ENCODE measurements at regions of chr7 and their contacts with region 1.

Region 1: DNA sequence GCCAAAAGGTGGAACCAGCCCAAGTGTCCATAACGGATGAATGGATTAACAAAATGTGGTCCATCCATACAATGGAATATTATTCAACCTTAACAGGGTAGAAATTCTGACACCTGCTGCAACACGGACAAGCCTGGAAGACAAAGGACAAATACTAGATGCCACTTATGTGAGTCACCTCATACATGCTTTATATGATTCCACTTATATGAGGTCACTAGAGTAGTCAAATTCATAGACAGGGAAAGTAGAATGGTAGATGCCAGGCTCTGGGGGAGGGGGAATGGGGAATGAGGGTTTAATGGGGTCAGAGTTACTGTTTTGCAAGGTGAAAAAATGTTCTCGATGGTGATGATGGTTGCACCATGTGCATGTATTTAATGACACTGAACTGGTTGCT is 34.0 kb upstream of the CYTH3 start:
- DNase-seq: peak; percentile 87
- ATAC-seq: peak; percentile 99
- H3K4me3 ChIP-seq: no peak overlapping the region
- H3K27ac ChIP-seq: no peak overlapping the region
- H3K4me1 ChIP-seq: peaks cover 20% of the 10 kb centered on the region
- H3K27me3 ChIP-seq: no peaks in the 10 kb centered on the region
- CTCF ChIP-seq: no peak

Region 2: DNA sequence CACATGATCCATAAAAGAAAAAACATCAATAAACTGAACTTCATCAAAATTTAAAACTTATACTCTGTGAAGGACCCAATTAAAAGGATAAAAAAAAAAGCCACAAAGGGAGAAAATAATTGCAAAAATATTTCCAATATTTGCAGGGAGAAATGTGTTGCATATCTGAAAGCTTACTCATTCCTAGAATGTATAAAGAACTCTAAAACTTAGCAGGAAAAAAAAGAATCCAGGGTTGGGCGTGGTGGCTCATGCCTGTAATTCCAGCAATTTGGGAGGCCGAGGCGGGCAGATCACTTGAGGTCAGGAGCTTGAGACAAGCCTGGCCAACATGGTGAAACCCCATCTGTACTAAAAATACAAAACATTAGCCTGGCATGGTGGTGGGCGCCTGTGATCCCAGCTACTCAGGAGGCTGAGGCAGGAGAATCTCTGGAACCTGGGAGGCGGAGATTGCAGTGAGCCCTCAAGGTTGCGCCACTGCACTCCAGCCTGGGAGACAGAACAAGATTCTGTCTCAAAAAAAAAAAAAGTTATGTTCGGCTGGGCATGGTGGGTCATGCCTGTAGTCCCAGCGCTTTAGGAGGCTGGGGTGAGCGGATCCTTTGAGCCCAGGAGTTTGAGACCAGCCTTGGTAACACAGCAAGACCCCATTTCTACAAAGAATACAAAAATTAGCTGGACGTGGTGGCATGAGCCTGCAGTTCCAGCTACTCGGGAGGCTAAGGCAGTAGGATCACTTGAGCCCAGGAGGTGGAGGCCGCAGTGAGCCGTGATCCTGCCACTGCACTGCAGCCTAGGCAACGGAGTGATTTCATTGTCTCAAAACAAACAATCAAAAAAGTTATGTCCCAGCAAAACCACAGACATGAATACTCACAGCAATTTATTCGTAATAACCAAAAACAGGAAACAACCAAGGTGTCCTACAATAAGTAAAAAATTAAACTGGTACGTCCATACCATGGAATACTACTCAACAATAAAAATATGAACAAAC is 22.8 kb before region 1 on chr7:
- CTCF ChIA-PET with region 1: no interaction called
- POLR2A ChIA-PET with region 1: interaction called, 4 read pairs
- intact Hi-C with region 1: loop called (anchors 2 kb)
- DNase-seq: peak; percentile 87
- ATAC-seq: peak; percentile 69
- H3K4me3 ChIP-seq: peak overlapping the region; percentile 44; the same call in 1 of the 2 replicates
- H3K27ac ChIP-seq: peak overlapping the region; percentile 100
- H3K4me1 ChIP-seq: peaks cover 35% of the 10 kb centered on the region
- H3K27me3 ChIP-seq: no peaks in the 10 kb centered on the region
- CTCF ChIP-seq: no peak

Region 3: DNA sequence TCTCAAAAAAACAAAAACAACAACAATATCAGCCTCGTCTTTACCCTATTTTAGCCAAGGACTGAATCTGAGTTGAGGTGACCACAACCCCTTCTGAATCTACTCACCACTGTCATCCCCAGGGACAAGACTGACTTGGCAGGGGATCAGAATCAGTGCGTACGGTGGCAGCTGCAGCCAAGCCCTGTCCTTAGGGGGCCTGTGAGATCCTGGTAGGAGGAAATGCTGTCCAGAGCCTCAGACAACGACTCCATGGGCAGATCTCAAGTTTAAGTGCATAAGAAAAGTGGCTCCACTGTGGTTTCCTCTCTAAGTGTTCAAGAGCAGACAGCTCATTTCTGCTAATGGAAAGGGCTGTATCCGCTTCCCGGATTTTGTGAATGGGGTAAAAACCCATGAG is 11.6 kb before region 1 on chr7:
- CTCF ChIA-PET with region 1: interaction called, 10 read pairs
- POLR2A ChIA-PET with region 1: no interaction called
- intact Hi-C with region 1: no loop called
- DNase-seq: no peak
- ATAC-seq: no peak
- H3K4me3 ChIP-seq: no peak overlapping the region
- H3K27ac ChIP-seq: no peak overlapping the region
- H3K4me1 ChIP-seq: peaks cover 10% of the 10 kb centered on the region
- H3K27me3 ChIP-seq: no peaks in the 10 kb centered on the region
- CTCF ChIP-seq: no peak